ENCODE measurements at regions of chr20 and their contacts with region 1.

Region 1: DNA sequence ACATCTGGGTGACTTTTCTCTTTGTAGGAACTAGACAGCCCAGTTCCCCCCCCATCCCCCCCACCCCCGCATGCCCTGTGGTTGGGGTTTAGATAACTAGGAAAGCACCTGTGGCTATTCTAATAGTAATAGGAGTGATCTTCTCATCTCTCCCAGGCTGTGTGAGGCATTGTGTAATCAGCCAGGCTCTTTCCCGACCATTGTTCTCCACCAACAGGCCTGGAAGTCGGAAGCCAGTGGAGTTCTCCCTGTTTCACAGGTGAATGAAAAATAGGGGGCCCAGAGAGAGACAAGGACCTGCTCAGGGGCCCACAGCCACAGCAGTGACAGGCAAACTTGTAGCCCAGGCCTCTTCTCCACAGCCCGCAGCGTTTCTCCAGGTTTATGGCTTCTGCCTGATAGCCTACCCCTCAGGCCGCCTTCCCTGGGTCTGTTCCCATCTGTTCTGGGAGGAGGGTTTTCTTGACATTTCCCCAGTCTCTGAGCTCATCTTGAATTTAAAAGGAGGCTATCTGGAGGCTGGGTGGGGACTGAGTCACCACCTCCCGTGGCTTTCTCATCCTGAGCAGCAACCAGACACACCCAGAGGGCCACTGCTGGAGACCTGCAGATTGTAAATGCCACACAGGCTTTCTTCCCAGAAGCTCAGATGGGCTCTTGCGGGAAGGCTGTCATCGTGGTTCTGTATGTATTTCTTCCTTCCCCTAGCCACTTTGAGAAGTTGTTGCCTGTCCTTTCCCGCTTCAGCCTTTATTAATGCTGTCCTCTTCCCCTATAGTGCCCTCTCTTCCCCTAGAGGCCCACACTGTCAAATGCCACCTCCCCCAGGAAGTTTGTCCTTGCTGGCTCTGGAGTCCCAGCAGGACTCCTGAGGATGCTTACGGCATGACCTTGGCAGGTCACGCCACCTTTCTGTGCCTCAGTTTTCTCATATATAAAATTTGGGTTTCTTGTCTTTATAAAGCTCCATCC is 75.9 kb upstream of the MYL9 start:
- DNase-seq: peak; percentile 64
- ATAC-seq: peak; percentile 20
- H3K4me3 Mint-ChIP-seq: peak overlapping the region; percentile 2
- H3K27ac Mint-ChIP-seq: peak overlapping the region; percentile 77
- H3K4me1 Mint-ChIP-seq: peaks cover 74% of the 10 kb centered on the region
- H3K27me3 Mint-ChIP-seq: no peaks in the 10 kb centered on the region

Region 2: DNA sequence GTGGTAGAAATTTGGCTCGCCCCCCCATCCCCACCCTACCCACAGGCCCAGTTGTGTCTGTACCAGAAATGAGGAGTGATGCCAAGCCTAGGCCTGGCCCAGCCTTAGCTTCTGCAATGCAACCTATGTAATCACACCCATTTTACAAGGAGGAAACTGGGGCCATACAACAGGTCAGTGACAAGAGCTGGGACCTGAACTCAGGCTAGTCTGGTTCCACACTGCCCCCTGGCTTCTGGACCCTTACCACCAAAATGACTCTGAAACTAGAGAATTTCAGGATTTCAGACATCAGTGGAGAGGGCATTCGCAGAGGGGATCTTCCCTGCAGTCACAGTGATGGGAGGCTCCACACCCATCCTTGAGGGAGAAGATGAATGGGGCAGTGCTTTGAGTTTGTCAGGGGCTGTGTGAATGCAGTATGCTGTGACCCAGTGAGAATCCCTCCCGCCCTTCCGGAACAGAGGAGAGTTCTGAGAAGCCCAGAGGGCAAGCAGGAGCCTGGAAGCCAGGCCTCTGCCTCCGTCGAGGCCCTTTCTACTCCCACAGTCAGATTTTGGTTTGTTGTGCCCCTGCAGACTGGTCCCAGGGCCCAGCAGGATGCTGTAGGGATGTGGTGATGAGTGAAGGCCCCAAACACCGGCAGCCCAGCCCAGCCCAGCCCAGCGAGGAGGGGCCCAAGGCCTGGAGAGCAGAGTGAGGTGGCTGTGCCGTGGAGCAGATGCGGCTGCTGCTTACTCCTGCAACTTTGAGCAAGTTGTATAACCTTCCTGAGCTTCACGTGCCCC is 27.8 kb after region 1 on chr20:
- CTCF ChIA-PET with region 1: interaction called, 20 read pairs
- DNase-seq: peak; percentile 50
- ATAC-seq: peak; percentile 18
- H3K4me3 Mint-ChIP-seq: no peak overlapping the region
- H3K27ac Mint-ChIP-seq: peak overlapping the region; percentile 91
- H3K4me1 Mint-ChIP-seq: peaks cover 28% of the 10 kb centered on the region
- H3K27me3 Mint-ChIP-seq: no peaks in the 10 kb centered on the region

Region 3: DNA sequence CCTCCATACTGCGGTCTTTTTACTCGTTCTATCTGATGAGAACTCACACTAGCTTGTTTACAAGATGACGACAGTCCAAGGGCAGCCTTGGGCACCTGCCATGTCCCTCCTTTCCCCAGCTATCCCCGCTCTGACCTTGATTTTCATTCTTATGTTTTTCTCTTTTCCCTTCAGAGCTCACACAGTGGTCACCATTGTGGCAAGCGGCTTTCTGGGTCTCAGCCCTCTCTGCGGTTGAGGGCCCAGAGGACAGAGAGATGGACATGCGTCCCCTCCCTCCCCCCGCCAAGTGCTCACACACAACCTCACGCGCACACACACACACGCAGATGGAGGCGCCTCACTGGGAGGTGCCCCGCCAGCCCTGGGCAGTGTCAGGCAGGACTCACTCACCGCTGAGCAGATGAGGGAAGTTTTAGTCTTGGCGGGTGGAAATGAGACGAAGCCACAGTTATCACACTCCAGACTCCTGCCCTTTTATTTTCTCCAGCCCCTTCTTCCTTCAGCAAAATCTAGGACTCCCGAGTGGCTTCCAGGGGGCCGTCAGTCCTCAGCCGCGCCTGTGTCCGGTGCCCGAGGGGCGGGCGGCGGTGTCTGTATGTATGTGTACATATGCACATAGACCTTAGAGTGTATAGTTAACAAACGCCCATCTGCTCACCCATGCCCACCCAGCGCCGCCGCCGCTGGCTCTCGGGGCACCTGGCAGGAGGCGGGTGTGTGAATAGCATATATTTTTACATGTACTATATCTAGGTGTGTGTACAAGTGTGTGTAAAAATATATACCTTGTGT is 62.1 kb after region 1 on chr20:
- CTCF ChIA-PET with region 1: no interaction called
- DNase-seq: no peak
- ATAC-seq: no peak
- H3K4me3 Mint-ChIP-seq: no peak overlapping the region
- H3K27ac Mint-ChIP-seq: no peak overlapping the region
- H3K4me1 Mint-ChIP-seq: no peaks in the 10 kb centered on the region
- H3K27me3 Mint-ChIP-seq: no peaks in the 10 kb centered on the region